Lower leg skin (tissue), 4 donors: ENCODE measurements at regions of chr2 and their contacts with region 1.

Region 1: DNA sequence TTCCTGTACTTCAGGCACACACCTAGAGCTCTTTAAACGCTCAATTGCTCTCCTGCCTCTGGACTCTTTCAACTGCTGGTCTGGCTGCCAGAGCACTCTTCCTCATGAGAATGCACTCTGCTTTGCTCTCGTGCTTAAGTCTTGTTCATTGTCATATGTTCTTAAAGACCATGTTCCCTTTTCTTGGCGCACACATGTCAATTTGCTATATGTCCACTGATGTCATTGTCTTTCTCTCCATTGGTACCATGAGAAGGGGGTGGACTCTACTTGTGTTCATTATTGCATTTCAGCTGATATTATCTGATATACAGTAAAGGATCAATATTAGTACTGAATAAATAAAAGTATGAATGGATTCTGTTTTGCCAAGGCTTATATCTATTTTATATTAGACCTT is 16.8 kb downstream of the SPHKAP start:
- DNase-seq: no peak
- H3K4me3 ChIP-seq: no peak overlapping the region
- CTCF ChIP-seq: no peak
- POLR2A ChIP-seq: no peak

Region 2: GRCh38 chr2:227643990-227644551 is 520.6 kb before region 1 on chr2:
- intact Hi-C with region 1: loop called (anchors 5 kb)
- DNase-seq: no peak
- H3K4me3 ChIP-seq: no peak overlapping the region
- CTCF ChIP-seq: no peak
- POLR2A ChIP-seq: no peak

Region 3: GRCh38 chr2:228072669-228073068 is 92.0 kb before region 1 on chr2:
- intact Hi-C with region 1: no loop called
- DNase-seq: no peak
- H3K4me3 ChIP-seq: no peak overlapping the region
- CTCF ChIP-seq: no peak
- POLR2A ChIP-seq: no peak

Region 4: GRCh38 chr2:228793116-228793515 is 628.4 kb after region 1 on chr2:
- intact Hi-C with region 1: no loop called
- DNase-seq: no peak
- H3K4me3 ChIP-seq: no peak overlapping the region
- CTCF ChIP-seq: no peak
- POLR2A ChIP-seq: no peak